ENCODE measurements at regions of chr6 and their contacts with region 1.

Region 1: GRCh38 chr6:47631269-47631772 is 67.1 kb upstream of the ADGRF4 start:
- DNase-seq: no peak
- H3K4me3 ChIP-seq: no peak overlapping the region
- CTCF ChIP-seq: peak; percentile 5

Region 2: DNA sequence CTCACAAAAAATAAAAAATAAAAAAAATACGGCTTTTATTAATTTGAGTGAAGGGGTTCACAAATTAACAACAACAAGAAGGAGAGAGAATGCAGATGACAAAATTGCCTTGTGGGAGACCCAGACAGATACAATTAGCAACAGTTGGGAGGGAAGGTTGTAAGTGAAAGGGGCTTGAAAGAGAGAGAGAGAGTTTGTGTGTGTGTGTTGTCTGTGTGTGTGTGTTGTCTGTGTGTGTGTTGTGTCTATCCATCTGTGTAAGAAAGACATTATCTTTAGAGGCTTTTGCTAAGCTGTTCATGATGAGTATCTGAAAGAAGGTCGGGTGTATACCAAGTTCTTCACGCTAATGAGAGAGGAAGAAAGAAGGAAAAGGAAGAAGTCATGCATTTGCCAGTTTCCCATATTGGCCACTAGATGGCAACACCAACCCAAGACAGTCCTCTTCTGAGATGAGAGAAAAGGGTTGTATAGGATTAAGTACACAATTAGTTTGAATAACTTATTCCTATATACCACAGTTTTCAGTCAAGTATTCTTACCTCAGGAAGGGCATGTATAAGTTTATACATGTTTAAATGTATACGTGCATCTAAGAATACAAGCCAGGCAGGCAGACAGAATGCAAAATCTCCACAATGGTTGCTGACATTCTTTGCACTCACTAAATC is 217.4 kb before region 1 on chr6:
- CTCF ChIA-PET with region 1: interaction called, 24 read pairs
- POLR2A ChIA-PET with region 1: no interaction called
- DNase-seq: peak; percentile 19
- H3K4me3 ChIP-seq: no peak overlapping the region; the same call in 1 of the 2 replicates
- CTCF ChIP-seq: peak; percentile 81

Region 3: DNA sequence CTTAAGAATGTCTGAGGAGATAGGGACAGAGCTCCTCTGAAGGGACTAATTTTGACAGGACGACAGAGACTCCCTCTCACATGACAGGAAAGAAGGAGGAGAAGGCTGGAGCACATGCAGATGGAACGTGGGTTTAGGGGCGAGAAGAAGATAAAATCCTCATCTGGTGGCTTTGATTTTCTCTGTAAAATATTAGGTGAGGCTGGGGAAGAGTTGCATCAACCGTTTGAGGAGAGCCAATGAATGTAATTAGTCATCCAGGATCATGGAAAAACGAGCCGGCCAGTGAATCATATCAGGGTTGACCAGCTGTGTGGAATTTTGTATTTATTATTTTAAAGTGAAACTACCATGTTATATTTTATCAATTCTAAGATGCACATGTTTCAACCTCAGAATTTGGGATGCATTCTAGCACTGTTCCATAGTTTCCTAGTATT is 20.2 kb after region 1 on chr6:
- CTCF ChIA-PET with region 1: interaction called, 10 read pairs
- POLR2A ChIA-PET with region 1: no interaction called
- DNase-seq: no peak
- H3K4me3 ChIP-seq: peak overlapping the region; percentile 27; the same call in 1 of the 2 replicates
- CTCF ChIP-seq: no peak

Region 4: DNA sequence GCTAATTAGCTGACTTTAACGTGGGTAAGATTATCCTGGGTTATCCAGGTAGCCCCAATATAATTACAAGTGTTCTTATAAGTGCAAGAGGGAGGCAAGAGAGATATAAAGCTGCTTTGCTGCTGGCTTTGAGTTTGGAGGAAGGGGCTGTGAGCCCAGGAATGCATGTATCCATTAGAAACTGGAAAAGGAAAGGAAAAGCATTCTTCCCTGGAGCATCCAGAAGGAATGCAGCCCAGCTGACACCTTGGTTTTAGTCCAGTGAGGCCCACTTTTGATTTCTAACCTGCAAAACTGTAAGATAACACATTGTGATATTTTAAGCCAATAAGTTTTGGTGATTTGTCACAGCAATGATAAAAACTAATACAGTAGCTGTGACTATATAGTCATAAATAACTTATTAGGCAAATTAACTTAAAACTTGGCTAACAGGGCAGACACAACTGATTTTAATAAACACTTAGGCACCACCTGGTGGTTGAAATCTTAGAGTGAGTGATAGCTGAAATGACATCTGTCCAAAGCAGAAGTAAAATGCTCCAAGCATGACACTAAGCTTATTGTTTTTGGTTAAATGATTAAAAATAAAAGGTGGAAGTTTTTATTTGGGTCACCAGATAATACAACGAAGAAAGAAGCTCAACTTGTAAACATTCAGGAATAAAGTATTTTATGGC is 102.7 kb after region 1 on chr6:
- CTCF ChIA-PET with region 1: interaction called, 45 read pairs
- POLR2A ChIA-PET with region 1: no interaction called
- DNase-seq: no peak
- H3K4me3 ChIP-seq: no peak overlapping the region
- CTCF ChIP-seq: no peak

Region 5: GRCh38 chr6:47773005-47773404 is 141.7 kb after region 1 on chr6:
- CTCF ChIA-PET with region 1: interaction called, 169 read pairs
- POLR2A ChIA-PET with region 1: no interaction called
- DNase-seq: no peak
- H3K4me3 ChIP-seq: no peak overlapping the region
- CTCF ChIP-seq: no peak

Region 6: GRCh38 chr6:47780510-47781356 is 149.4 kb after region 1 on chr6:
- CTCF ChIA-PET with region 1: interaction called, 169 read pairs
- POLR2A ChIA-PET with region 1: no interaction called
- DNase-seq: peak; percentile 42
- H3K4me3 ChIP-seq: no peak overlapping the region
- CTCF ChIP-seq: peak; percentile 47

Region 7: GRCh38 chr6:47787620-47788497 is 156.5 kb after region 1 on chr6:
- CTCF ChIA-PET with region 1: interaction called, 169 read pairs
- POLR2A ChIA-PET with region 1: no interaction called
- DNase-seq: no peak
- H3K4me3 ChIP-seq: no peak overlapping the region
- CTCF ChIP-seq: peak; percentile 86

Measured in AG04449 (cell line).